Left lung (tissue), 14 donors: ENCODE measurements at regions of chr2 and their contacts with region 1.

Region 1: GRCh38 chr2:235766278-235766677 is 272.4 kb downstream of the AGAP1 start:
- DNase-seq: peak in 2 of 4 donors; percentile 69 to 88
- ATAC-seq: peak; percentile 94
- H3K4me3 ChIP-seq: no peak overlapping the region
- H3K27ac ChIP-seq: no peak overlapping the region
- H3K4me1 ChIP-seq: peaks cover 0 to 3% of the 10 kb centered on the region in 2 donors
- H3K27me3 ChIP-seq: no peaks in the 10 kb centered on the region
- CTCF ChIP-seq: peak; percentile 90 to 93

Region 2: GRCh38 chr2:236180831-236181453 is 414.7 kb after region 1 on chr2:
- intact Hi-C with region 1: loop called in 1 of 2 experiments (anchors 5 kb)
- DNase-seq: peak in 1 of 4 donors; percentile 62
- ATAC-seq: peak; percentile 67
- H3K4me3 ChIP-seq: no peak overlapping the region
- H3K27ac ChIP-seq: no peak overlapping the region
- H3K4me1 ChIP-seq: peaks cover 7 to 13% of the 10 kb centered on the region in 2 donors
- H3K27me3 ChIP-seq: peaks cover 54 to 82% of the 10 kb centered on the region in 2 donors
- CTCF ChIP-seq: peak; percentile 52 to 59